ENCODE measurements at regions of chr4 and their contacts with region 1.

Region 1: GRCh38 chr4:26061248-26061986 is 147.4 kb downstream of the SMIM20 start:
- DNase-seq: peak in 4 of 5 donors; percentile 15 to 26 (median 16)
- H3K4me3 ChIP-seq: no peak overlapping the region
- H3K4me3 Mint-ChIP-seq: no peak overlapping the region
- H3K27ac ChIP-seq: no peak overlapping the region
- H3K27ac Mint-ChIP-seq: no peak overlapping the region
- H3K4me1 ChIP-seq: no peaks in the 10 kb centered on the region
- H3K4me1 Mint-ChIP-seq: peaks cover 2 to 8% (median 7%) of the 10 kb centered on the region in 4 donors
- H3K27me3 ChIP-seq: no peaks in the 10 kb centered on the region
- H3K27me3 Mint-ChIP-seq: no peaks in the 10 kb centered on the region

Region 2: DNA sequence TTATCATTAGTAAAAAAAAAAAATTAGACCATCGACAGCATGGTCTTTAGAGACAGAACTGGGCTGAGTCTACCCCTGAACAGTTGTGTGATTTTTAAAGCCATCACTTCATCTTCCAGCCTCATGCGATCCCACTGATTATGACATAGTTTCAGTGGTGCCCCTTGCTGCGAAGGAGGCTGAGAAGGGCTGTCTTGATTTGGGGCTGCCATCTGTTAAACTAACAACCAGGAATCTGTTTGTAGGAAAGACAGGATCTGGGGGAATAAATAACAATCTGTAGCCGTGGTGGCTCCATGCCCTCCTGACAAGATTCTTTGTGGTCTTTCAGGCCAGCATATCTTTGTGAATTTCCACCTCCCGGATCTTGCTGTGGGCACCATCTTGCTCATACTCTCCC is 388.7 kb before region 1 on chr4:
- CTCF ChIA-PET with region 1: no interaction called
- POLR2A ChIA-PET with region 1: no interaction called
- intact Hi-C with region 1: no loop called
- DNase-seq: no peak
- H3K4me3 ChIP-seq: no peak overlapping the region
- H3K4me3 Mint-ChIP-seq: no peak overlapping the region
- H3K27ac ChIP-seq: no peak overlapping the region
- H3K27ac Mint-ChIP-seq: no peak overlapping the region
- H3K4me1 ChIP-seq: no peaks in the 10 kb centered on the region
- H3K4me1 Mint-ChIP-seq: no peaks in the 10 kb centered on the region
- H3K27me3 ChIP-seq: no peaks in the 10 kb centered on the region
- H3K27me3 Mint-ChIP-seq: peaks cover 2 to 3% of the 10 kb centered on the region in 2 donors

Region 3: GRCh38 chr4:26076000-26076587 is 14.7 kb after region 1 on chr4:
- CTCF ChIA-PET with region 1: interaction called, 11 read pairs
- POLR2A ChIA-PET with region 1: interaction called, 3 read pairs
- intact Hi-C with region 1: no loop called
- DNase-seq: peak in 1 of 5 donors; percentile 9
- H3K4me3 ChIP-seq: no peak overlapping the region
- H3K4me3 Mint-ChIP-seq: no peak overlapping the region
- H3K27ac ChIP-seq: no peak overlapping the region
- H3K27ac Mint-ChIP-seq: peak overlapping the region; percentile 9 to 80 (median 32)
- H3K4me1 ChIP-seq: peaks cover 31% of the 10 kb centered on the region
- H3K4me1 Mint-ChIP-seq: peaks cover 26 to 46% (median 34%) of the 10 kb centered on the region in 4 donors
- H3K27me3 ChIP-seq: no peaks in the 10 kb centered on the region
- H3K27me3 Mint-ChIP-seq: no peaks in the 10 kb centered on the region

Measured in CD4-positive, alpha-beta memory T cell (primary cell).